Mucosa of descending colon (tissue), 3 donors: ENCODE measurements at regions of chr13 and their contacts with region 1.

Region 1: DNA sequence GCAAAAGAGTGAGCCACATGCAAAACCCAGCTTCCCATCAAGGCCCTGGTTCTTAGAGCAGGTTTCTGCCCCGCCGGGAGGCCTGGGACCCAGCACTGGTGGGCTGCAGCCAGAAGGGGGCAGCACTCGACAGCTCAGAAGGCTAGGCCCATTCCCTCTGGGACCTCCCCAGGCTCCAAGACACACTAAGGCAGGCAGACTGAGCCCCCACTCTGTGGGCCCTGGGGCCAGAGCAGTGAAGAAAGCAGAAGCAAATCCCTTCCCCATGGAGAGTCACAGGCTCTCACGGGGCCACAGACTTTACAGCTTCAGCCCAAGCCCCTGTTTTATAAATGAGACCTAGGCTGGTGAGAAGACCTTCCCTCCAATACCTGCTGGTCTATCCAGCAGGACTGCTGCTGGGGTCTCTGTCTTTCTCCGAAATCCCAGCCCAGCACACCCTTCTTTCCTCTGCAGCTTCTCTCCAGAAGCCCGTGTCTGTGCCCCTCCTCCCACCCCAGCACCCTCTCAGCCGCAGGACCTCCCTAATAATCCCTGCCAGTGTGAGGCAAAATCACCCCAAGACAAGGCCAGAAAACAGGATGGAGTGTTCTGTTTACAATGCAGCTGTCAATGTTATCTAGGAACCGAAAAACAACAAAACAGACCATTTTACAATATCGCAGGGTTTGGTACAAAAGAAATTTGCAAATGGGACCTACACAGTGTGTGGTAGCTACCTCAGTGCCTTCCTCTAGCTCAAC is 109.3 kb downstream of the ABCC4 start:
- DNase-seq: peak; percentile 72 to 91 (median 87)
- ATAC-seq: peak; percentile 95
- H3K4me3 ChIP-seq: no peak overlapping the region
- H3K4me1 ChIP-seq: no peaks in the 10 kb centered on the region
- CTCF ChIP-seq: peak; percentile 82

Region 2: GRCh38 chr13:95378603-95379002 is 186.6 kb after region 1 on chr13:
- intact Hi-C with region 1: loop called (anchors 1 to 5 kb)
- DNase-seq: no peak
- ATAC-seq: no peak
- H3K4me3 ChIP-seq: no peak overlapping the region
- H3K4me1 ChIP-seq: peaks cover 6% of the 10 kb centered on the region
- CTCF ChIP-seq: no peak

Region 3: GRCh38 chr13:95403828-95404522 is 212.0 kb after region 1 on chr13:
- intact Hi-C with region 1: loop called (anchors 5 kb)
- DNase-seq: peak; percentile 81 to 88 (median 82)
- ATAC-seq: peak; percentile 96
- H3K4me3 ChIP-seq: no peak overlapping the region
- H3K4me1 ChIP-seq: no peaks in the 10 kb centered on the region
- CTCF ChIP-seq: peak; percentile 78